ENCODE measurements at regions of chr15 and their contacts with region 1.

Region 1: DNA sequence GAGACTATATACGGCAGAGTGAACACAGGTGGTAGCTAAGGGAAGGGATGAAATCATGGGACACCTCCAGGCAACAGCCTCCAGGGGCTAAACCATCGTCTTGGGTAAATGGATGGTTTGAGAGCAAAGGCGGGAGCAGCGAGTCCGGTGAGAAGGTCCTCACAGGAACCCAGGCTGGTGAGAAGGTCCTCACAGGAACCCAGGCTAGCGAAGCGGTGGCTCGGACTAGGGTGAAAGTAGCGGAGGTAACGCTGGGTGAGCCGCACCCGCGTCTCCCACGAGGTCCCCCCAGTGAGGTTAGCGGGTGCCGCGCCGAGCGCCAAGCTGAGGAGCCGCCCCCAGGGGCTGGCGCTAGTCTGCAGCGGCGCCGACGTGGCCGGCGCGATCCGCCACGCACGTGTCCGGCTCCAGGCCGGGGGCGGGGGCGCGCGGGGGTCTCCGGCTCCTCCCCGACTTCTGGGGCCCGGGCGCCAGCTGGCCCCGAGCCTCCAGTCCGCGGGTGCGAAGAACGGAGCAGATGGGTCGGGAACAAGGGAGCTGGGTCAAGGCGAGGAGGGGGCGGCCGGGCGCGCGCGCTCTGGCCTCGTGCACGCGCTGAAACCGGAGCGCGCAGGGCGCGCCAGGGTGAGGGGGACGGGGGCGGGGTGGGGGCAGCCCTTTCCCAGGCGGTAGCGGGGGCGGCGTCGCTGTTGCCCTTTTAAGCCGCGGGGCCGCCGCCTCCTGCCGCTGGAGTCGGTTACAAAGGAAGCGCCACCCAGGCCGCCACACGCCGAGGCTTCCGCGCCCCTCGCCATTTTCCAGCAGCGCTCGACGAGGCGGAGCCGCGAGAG is at the start of gene UBE2Q2:
- H3K4me3 Mint-ChIP-seq: peak within 1 kb of the TSS; percentile 92
- H3K27ac Mint-ChIP-seq: peak within 1 kb of the TSS; percentile 88
- H3K4me1 Mint-ChIP-seq: peaks cover 44% of the 10 kb centered on the region
- H3K27me3 Mint-ChIP-seq: no peaks in the 10 kb centered on the region

Region 2: DNA sequence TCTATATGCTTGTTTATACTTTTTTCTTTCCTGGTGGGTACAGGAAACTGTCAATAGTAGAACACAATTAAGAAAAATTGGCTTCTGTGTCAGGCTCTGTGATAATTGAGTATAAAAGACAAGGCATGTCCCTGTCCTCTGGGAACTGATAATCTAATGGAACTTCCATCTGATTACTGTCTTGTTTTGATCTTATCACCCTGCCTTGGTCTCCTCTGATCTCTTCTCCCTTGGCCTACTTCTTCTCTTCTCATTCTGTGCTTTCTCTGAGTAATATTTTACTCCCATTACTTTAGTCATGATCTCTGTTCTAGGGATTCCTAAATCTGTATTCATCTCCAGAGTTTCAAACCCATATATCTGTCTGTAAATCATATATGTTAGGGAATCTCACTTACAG is 14.9 kb after region 1 on chr15:
- intact Hi-C with region 1: no loop called
- H3K4me3 Mint-ChIP-seq: no peak overlapping the region
- H3K27ac Mint-ChIP-seq: no peak overlapping the region
- H3K4me1 Mint-ChIP-seq: peaks cover 14% of the 10 kb centered on the region
- H3K27me3 Mint-ChIP-seq: no peaks in the 10 kb centered on the region

Region 3: DNA sequence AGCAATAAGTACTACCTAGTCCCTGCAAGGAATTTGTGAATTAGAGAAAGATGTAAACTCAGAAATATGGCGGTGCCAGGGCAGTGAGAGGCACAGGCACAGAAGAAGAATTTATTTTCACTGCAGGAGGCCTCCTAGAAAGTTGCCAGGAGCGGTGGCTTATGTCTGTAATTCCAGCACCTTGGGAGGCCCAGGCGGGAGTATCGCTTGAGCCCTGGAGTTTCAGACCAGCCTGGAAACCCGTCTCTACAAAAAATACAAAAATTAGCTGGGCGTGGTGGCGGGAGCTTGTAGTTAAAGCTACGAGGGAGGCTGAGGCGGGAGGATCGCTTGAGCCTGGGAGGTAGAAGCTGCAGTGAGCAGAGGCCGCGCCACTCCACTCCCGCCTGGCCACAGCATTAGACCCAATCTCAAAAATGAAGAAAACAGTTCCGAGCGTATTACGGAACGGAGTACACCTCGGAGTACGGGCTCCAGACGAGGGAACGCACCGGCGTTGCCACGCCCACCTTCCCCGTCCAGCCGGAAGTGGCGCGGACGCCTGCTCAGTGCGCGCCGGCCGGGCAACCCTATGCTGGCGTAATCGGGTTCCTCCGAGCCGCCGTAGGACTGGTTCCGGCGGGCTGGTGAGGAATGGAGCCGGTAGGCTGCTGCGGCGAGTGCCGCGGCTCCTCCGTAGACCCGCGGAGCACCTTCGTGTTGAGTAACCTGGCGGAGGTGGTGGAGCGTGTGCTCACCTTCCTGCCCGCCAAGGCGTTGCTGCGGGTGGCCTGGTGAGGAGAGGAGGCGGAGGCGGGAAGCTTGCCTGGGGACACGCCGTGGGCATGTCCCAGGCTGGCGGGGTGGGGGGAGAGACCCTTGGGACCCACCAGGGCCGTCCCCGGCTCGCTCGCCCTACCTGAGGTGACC is 60.6 kb after region 1 on chr15 and contains the start of gene FBXO22:
- intact Hi-C with region 1: loop called (anchors 10 kb)
- H3K4me3 Mint-ChIP-seq: peak within 1 kb of the TSS; percentile 99
- H3K27ac Mint-ChIP-seq: peak within 1 kb of the TSS; percentile 89
- H3K4me1 Mint-ChIP-seq: peaks cover 18% of the 10 kb centered on the region
- H3K27me3 Mint-ChIP-seq: no peaks in the 10 kb centered on the region